Naive thymus-derived CD8-positive, alpha-beta T cell (primary cell): ENCODE measurements at regions of chr1 and their contacts with region 1.

Region 1: GRCh38 chr1:111592389-111593361 is 26.9 kb upstream of the RAP1A start:
- DNase-seq: peak; percentile 55 to 94 (median 70)
- ATAC-seq: peak; percentile 81 to 91
- H3K4me3 Mint-ChIP-seq: peak overlapping the region; percentile 61 to 82 (median 68)
- H3K27ac Mint-ChIP-seq: peak overlapping the region; percentile 26 to 97 (median 90)
- H3K4me1 Mint-ChIP-seq: peaks cover 27 to 59% (median 56%) of the 10 kb centered on the region in 4 donors
- H3K27me3 Mint-ChIP-seq: no peaks in the 10 kb centered on the region

Region 2: DNA sequence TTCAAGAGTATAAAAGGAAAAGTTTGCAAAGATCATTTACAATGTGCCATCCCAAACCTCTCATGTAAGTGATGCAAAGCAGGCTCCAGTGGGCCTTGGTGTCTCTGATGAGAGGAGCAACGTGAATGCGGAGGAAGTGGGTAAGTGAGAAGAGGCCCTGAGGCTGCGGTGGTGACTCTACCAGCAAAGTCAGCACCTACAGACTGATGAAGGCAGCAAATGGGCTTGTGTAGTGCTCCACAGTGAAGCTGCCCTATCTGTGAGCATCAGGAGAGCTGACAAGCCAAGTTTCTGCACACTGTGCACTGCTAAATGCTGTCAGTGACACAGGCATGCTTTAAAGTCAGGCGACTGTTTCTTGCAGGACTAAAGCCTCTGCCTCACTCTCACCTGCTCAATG is 11.3 kb after region 1 on chr1:
- POLR2A ChIA-PET with region 1: interaction called, 61 read pairs
- DNase-seq: peak; percentile 40 to 88 (median 72)
- ATAC-seq: peak; percentile 98
- H3K4me3 Mint-ChIP-seq: peak overlapping the region; percentile 31 to 83 (median 60)
- H3K27ac Mint-ChIP-seq: peak overlapping the region; percentile 80 to 97 (median 89)
- H3K4me1 Mint-ChIP-seq: peaks cover 32 to 75% (median 74%) of the 10 kb centered on the region in 4 donors
- H3K27me3 Mint-ChIP-seq: no peaks in the 10 kb centered on the region

Region 3: GRCh38 chr1:111611986-111612385 is 19.3 kb after region 1 on chr1:
- POLR2A ChIA-PET with region 1: interaction called, 61 read pairs
- DNase-seq: no peak
- ATAC-seq: no peak
- H3K4me3 Mint-ChIP-seq: no peak overlapping the region
- H3K27ac Mint-ChIP-seq: peak overlapping the region in 3 of 10 donors; percentile 28 to 63 (median 37)
- H3K4me1 Mint-ChIP-seq: peaks cover 15 to 30% (median 25%) of the 10 kb centered on the region in 4 donors
- H3K27me3 Mint-ChIP-seq: no peaks in the 10 kb centered on the region

Region 4: GRCh38 chr1:111619635-111620440 is 27.2 kb after region 1 on chr1 and contains the start of gene RAP1A:
- POLR2A ChIA-PET with region 1: interaction called, 28 read pairs
- DNase-seq: peak; percentile 81 to 98 (median 90)
- ATAC-seq: peak; percentile 73 to 80
- H3K4me3 Mint-ChIP-seq: peak within 1 kb of the TSS; percentile 92 to 99 (median 98)
- H3K27ac Mint-ChIP-seq: peak within 1 kb of the TSS; percentile 85 to 98 (median 94)
- H3K4me1 Mint-ChIP-seq: peaks cover 44 to 80% (median 73%) of the 10 kb centered on the region in 4 donors
- H3K27me3 Mint-ChIP-seq: no peaks in the 10 kb centered on the region
- polyA plus RNA-seq, gene RAP1A: 43.4 to 53.9 (median 50.0) TPM

Region 5: DNA sequence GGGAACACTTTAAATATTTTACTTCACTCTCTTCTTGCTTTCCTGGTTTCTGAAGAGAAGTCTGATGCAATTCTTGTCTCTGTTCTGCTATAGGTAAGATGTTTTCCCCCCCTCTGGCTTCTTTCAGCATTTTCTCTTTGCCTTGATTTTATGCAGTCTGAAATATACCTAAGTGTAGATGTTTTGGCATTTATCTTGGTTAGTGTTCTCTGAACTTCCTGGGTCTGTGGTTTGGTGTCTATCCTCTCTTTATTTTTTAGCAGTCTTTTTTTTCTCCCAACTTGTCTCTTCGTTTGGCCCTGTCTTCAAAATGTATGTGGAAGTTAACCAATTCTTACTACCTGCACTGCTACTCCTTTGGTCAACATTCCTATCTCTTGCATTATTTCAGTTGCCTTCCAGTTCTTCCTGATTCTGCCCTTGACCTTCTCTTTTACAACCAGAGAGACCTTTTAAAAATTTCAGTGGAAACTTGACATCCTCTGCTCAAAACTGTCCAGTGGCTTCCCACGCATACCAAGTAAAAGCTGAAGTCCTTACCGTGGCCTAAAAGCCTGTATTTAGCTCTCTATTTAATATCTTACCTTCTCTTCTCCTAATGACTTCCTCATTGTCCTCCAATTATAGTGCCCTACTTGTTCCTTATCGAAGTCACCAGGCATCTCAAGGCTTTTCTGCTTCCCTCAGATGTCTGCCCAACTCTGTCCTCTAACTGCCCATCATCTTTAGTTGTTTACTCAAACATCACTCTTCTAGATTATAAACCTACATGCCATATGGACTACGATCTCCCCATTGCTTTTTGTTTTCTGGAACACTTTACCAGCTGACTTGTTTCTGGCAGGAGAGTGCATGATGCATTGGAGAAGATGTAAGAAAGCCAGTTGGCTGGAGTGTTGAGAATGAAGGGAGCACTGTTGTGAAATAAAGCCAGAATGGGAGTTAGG is 67.8 kb after region 1 on chr1:
- POLR2A ChIA-PET with region 1: no interaction called
- DNase-seq: peak in 3 of 10 donors; percentile 20 to 51 (median 37)
- ATAC-seq: peak; percentile 76
- H3K4me3 Mint-ChIP-seq: no peak overlapping the region
- H3K27ac Mint-ChIP-seq: no peak overlapping the region
- H3K4me1 Mint-ChIP-seq: peaks cover 25 to 60% (median 49%) of the 10 kb centered on the region in 4 donors
- H3K27me3 Mint-ChIP-seq: no peaks in the 10 kb centered on the region